Panc1 (cell line): ENCODE measurements at regions of chr1 and their contacts with region 1.

Region 1: DNA sequence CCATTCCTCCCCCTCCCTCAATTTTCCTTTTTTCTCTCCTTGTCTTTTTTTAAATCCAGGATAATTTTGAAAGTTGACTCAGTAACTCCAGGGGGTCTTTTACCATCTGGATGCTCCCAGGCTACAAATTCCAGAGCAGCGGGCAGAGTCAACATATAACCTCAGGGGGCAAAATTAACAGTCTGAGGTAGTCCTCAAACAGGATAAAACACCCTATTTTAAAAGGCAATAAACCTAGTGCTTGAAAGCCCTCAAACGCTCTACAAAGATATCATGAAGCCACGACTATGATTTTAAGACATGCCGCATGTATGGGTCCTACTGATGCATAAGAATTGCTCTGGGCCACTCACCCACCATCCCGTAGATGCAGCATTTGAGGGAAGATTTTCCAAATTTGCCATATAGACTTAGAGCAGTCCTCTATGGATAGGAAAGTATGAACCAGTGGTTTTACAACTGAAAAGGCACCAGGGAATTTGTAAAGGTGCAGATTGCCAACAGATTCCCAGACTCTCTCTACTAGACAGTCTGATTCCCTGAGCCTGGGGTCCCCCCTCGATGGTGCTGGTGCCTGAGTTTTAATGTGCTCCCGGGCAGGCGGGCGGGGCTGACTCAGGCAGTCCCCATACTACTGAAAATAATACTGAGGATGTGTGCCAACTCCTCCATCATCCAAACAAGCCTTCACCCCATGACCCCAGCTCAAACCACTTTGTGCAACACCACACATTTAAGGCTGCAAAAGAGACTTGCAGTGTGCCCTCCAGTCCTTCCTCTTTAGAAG is 37.2 kb downstream of the PTPN14 start:
- DNase-seq: no peak
- ATAC-seq: peak; percentile 73
- H3K4me3 ChIP-seq: peak overlapping the region; percentile 22 to 35
- H3K27ac ChIP-seq: peak overlapping the region; percentile 93
- H3K4me1 ChIP-seq: peaks cover 71% of the 10 kb centered on the region
- H3K27me3 ChIP-seq: no peaks in the 10 kb centered on the region
- CTCF ChIP-seq: no peak

Region 2: DNA sequence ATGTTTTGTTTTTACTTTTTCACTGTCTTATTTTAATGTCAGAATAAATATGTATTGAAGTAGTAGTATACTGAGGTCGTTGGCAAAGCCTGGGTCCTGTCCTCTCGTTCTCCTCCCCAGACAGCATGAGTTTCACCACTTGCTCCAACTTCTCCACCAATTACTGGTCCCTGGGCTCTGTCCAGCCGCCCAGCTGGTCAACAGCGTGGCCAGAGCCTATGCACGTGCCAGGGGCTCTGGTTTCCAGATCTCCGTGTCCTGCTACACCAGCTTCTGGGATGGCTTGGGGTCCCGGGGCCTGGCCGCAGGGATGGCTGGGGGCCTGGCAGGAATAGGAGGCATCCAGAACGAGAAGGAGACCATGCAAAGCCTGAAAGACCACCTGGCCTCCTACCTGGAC is 17.8 kb after region 1 on chr1:
- CTCF ChIA-PET with region 1: no interaction called
- POLR2A ChIA-PET with region 1: no interaction called
- in situ Hi-C with region 1: no loop called
- intact Hi-C with region 1: no loop called
- DNase-seq: no peak
- ATAC-seq: no peak
- H3K4me3 ChIP-seq: no peak overlapping the region
- H3K27ac ChIP-seq: no peak overlapping the region
- H3K4me1 ChIP-seq: peaks cover 28% of the 10 kb centered on the region
- H3K27me3 ChIP-seq: no peaks in the 10 kb centered on the region
- CTCF ChIP-seq: no peak

Region 3: DNA sequence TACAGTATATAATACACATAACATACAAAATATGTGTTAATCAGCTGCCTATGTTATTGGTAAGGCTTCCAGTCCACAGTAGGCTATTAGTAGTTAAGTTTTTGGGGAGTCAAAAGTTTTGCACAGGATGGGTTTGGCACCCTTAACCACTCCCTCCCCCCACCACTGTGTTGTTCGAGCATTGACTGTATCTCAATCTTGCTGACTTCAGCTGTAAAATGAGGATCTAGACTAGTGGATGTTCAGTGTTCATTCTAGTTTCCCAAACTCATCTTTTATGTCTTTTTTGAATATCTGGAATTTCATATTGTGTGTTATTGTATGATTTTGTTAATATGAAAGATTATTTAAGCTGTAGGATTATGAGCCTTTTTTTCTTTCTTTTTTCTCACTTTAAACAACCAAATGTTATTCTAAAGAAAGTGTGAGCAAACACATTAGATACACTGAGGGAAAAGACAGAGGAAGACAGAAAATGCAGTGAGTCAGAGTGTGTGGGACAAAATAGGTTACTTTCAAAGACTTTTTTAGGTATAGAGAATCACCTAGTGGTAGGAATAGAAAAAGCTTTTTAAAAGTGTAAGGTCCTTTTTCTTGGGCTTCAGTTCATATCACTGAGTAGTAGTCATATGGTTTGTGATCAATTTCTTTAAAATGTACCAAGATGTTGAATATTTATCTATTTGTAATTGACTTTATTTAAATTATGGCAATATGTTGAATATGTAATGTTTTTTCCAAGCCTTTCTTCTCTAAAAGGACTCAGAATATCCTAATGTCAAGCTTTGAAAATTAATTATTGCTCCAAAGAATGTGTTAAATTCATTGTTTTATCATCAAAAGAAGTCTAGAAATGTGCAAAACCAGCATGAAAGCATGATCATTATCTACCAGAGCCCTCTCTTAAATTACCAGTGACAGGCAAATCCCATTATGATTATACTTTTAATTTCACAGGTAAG is 70.9 kb after region 1 on chr1:
- CTCF ChIA-PET with region 1: no interaction called
- POLR2A ChIA-PET with region 1: no interaction called
- in situ Hi-C with region 1: no loop called
- intact Hi-C with region 1: loop called (anchors 5 kb)
- DNase-seq: peak; percentile 62
- ATAC-seq: peak; percentile 73
- H3K4me3 ChIP-seq: no peak overlapping the region
- H3K27ac ChIP-seq: peak overlapping the region; percentile 86
- H3K4me1 ChIP-seq: peaks cover 43% of the 10 kb centered on the region
- H3K27me3 ChIP-seq: no peaks in the 10 kb centered on the region
- CTCF ChIP-seq: peak; percentile 93; the same call in 1 of the 2 replicates